ENCODE measurements at regions of chr16 and their contacts with region 1.

Region 1: GRCh38 chr16:11183035-11183812 is 72.8 kb downstream of the SOCS1 start:
- DNase-seq: peak in 1 of 2 experiments; percentile 64
- H3K4me3 ChIP-seq: no peak overlapping the region
- H3K27ac ChIP-seq: no peak overlapping the region
- H3K4me1 ChIP-seq: peaks cover 3 to 17% (median 10%) of the 10 kb centered on the region in 4 experiments
- H3K27me3 ChIP-seq: no peaks in the 10 kb centered on the region
- CTCF ChIP-seq: peak; percentile 34 to 48 (median 46)
- EP300 ChIP-seq: no peak
- POLR2A ChIP-seq: no peak
- RAD21 ChIP-seq: peak; percentile 33 to 38

Region 2: GRCh38 chr16:10995565-10995964 is 187.7 kb before region 1 on chr16:
- CTCF ChIA-PET with region 1: no interaction called
- POLR2A ChIA-PET with region 1: no interaction called
- DNase-seq: no peak
- H3K4me3 ChIP-seq: no peak overlapping the region
- H3K27ac ChIP-seq: no peak overlapping the region
- H3K4me1 ChIP-seq: no peaks in the 10 kb centered on the region
- H3K27me3 ChIP-seq: no peaks in the 10 kb centered on the region
- CTCF ChIP-seq: no peak
- EP300 ChIP-seq: no peak
- POLR2A ChIP-seq: no peak
- RAD21 ChIP-seq: no peak

Region 3: GRCh38 chr16:11196286-11196828 is 13.1 kb after region 1 on chr16:
- CTCF ChIA-PET with region 1: interaction called, 31 read pairs
- POLR2A ChIA-PET with region 1: interaction called, 5 read pairs
- DNase-seq: no peak
- H3K4me3 ChIP-seq: no peak overlapping the region
- H3K27ac ChIP-seq: no peak overlapping the region
- H3K4me1 ChIP-seq: peaks cover 0 to 12% (median 7%) of the 10 kb centered on the region in 4 experiments; a peak in 5 of 7 replicates
- H3K27me3 ChIP-seq: no peaks in the 10 kb centered on the region
- CTCF ChIP-seq: no peak
- EP300 ChIP-seq: no peak
- POLR2A ChIP-seq: no peak
- RAD21 ChIP-seq: no peak

Region 4: GRCh38 chr16:11263737-11264136 is 80.5 kb after region 1 on chr16:
- CTCF ChIA-PET with region 1: no interaction called
- POLR2A ChIA-PET with region 1: no interaction called
- DNase-seq: no peak
- H3K4me3 ChIP-seq: no peak overlapping the region
- H3K27ac ChIP-seq: no peak overlapping the region
- H3K4me1 ChIP-seq: 0 out of 7 replicates have a peak, but pooled peaks cover 0 to 5% (median 0%) of the 10 kb centered on the region in 4 experiments
- H3K27me3 ChIP-seq: no peaks in the 10 kb centered on the region; a peak in 1 of 7 replicates
- CTCF ChIP-seq: no peak
- EP300 ChIP-seq: no peak
- POLR2A ChIP-seq: no peak
- RAD21 ChIP-seq: no peak

Region 5: DNA sequence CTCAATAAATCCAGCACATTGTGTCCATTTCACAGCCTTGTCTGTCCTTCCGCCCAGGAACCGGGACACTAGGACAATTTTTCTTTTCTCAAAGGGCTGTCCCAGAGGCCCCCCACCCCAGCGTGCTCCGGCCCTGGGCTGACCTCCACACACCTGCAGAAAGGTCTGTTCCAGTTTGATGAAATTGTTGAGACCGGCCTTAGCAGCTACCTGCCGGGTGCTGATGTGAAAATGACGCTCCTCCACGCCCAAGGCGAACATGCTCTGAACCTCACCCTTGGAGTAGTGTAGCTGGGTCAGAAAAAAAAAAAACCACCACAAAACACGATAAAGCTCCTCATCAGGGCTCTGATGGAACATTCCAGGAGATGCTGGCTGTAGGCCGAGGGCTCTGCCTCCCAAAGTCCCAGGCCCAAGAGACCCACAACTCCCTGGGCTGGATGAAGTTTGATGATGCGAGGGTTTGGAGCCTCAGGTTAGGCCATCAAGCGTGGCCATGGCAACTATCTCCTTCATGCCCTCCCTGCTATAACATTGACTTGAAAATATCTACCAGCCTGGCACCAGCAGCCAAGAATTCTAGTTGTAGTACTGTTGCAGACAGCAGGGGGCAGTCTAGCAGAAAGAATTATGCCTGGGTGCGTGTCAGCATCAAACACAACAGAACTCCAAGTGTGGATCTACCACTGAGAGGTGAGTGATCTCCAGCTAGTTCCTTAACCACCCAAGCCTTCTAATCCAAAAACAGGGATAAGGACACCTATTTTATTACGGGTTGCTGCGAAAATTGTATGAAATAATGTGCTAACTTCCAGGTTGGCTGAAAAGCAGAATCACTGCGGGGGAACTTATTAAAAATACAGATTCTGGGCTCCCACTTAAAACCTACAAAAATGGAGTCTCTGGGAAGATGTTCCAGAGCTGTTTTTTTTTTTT is 224.1 kb after region 1 on chr16:
- CTCF ChIA-PET with region 1: no interaction called
- POLR2A ChIA-PET with region 1: no interaction called
- DNase-seq: peak in 1 of 2 experiments; percentile 88
- H3K4me3 ChIP-seq: no peak overlapping the region
- H3K27ac ChIP-seq: no peak overlapping the region
- H3K4me1 ChIP-seq: no peaks in the 10 kb centered on the region; a peak in 2 of 7 replicates
- H3K27me3 ChIP-seq: no peaks in the 10 kb centered on the region
- CTCF ChIP-seq: peak; percentile 39 to 83 (median 73)
- EP300 ChIP-seq: no peak
- POLR2A ChIP-seq: no peak
- RAD21 ChIP-seq: peak; percentile 80 to 86

Measured in H1 (cell line).